Heart right ventricle (tissue), 16 donors: ENCODE measurements at regions of chr14 and their contacts with region 1.

Region 1: DNA sequence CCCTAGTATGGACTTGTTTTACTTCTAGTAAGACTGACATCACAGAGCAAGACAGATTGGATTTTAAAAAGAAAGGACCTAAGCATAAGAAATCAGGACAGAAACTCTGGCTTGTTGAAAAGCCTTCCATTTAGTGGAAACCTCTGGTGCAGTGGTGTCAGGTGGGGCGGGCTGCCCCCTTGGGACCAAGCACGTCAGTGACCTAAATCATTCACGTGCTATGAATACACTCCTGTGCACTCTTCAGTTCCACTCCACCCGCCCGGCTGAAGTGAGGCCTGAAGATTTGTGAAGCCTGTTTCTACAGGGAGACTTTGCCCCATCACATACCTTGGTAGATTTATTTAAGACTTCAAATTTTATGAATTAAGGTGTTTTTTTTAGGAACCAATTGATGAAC is 58.2 kb upstream of the STRN3 start:
- DNase-seq: no peak
- ATAC-seq: no peak
- H3K4me3 ChIP-seq: no peak overlapping the region
- H3K27ac ChIP-seq: no peak overlapping the region
- H3K4me1 ChIP-seq: peaks cover 0 to 7% (median under 1%) of the 10 kb centered on the region in 9 donors
- H3K27me3 ChIP-seq: no peaks in the 10 kb centered on the region
- CTCF ChIP-seq: no peak

Region 2: DNA sequence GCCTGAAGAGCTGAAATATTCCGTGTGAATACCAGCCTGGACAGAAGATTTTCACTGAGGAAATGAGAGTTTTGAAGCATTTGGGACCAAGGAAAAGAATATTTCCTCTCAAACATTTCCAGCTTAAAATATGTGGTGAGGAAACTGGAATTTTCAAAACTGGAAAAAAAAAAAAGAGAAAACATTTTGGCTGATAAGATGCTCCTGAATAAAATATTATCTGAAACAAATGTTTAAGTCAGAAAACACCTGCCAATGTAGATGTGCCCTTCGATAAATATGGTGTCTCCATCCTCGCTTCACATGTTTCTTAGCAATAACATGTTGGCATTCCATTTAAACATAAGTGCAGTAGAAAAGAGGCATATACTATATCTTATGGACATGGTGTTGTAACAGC is 1723.7 kb before region 1 on chr14:
- intact Hi-C with region 1: no loop called
- DNase-seq: no peak
- ATAC-seq: no peak
- H3K4me3 ChIP-seq: no peak overlapping the region
- H3K27ac ChIP-seq: no peak overlapping the region
- H3K4me1 ChIP-seq: no peaks in the 10 kb centered on the region
- H3K27me3 ChIP-seq: peaks cover 0 to 3% (median 0%) of the 10 kb centered on the region in 7 donors
- CTCF ChIP-seq: no peak

Region 3: DNA sequence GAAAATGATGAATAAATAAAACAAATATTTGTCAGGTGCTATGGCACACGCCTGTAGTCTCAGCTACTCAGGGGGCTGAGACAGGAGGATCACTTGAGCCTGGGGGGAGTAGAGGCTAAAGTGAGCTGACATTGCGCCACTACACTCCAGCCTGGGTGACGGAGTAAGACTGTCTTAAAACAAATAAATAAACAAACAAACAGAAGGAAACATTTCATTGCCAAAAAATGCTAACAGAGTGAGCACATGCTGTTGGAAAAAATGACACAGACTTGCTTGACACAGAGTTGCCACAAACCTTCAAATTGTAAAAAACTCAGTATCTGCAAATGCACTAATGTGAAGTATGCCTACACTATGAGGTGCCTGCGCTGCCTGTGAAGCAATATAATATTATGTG is 109.8 kb before region 1 on chr14:
- intact Hi-C with region 1: loop called in 1 of 10 experiments (anchors 5 kb)
- DNase-seq: no peak
- ATAC-seq: peak in 4 of 8 donors; percentile 8 to 49 (median 31)
- H3K4me3 ChIP-seq: no peak overlapping the region
- H3K27ac ChIP-seq: no peak overlapping the region
- H3K4me1 ChIP-seq: peaks cover 0 to 60% (median 27%) of the 10 kb centered on the region in 9 donors
- H3K27me3 ChIP-seq: no peaks in the 10 kb centered on the region
- CTCF ChIP-seq: no peak

Region 4: GRCh38 chr14:30982533-30982932 is 101.9 kb before region 1 on chr14:
- intact Hi-C with region 1: loop called (anchors 1 to 5 kb)
- DNase-seq: no peak
- ATAC-seq: no peak
- H3K4me3 ChIP-seq: no peak overlapping the region
- H3K27ac ChIP-seq: no peak overlapping the region
- H3K4me1 ChIP-seq: peaks cover 0 to 12% (median 4%) of the 10 kb centered on the region in 9 donors
- H3K27me3 ChIP-seq: no peaks in the 10 kb centered on the region
- CTCF ChIP-seq: no peak